Common myeloid progenitor, CD34-positive (primary cell): ENCODE measurements at regions of chr2 and their contacts with region 1.

Region 1: DNA sequence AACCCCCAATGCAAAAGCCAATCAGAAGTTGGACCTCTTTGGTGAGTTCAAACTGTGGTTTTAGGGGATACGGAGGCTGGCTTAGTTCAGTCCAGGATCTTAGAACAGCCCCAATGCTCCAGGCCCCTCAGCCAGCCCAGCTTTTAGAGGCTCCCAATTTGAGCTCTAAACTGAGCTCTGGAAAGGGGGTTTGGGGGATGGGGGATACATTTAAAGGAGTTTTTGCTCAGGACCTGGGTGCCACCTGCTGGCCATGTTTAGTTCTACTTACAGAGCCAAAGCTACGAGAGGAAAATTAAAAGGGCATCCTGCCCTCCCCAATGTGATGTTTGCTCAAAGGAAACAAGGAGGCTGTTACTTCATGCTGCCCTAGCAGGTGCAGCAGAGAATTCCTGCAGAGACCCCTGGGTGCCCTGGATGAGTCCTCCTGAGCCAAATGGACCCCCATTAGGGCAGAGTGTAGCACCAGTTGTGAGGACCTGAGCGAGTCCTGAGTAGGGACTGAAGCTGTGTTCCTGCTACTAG is 15.9 kb upstream of the TMEM214 start:
- DNase-seq: peak; percentile 70 to 83 (median 72)
- H3K4me3 ChIP-seq: no peak overlapping the region
- H3K27ac ChIP-seq: no peak overlapping the region
- H3K4me1 ChIP-seq: peaks cover 0 to 9% (median 6%) of the 10 kb centered on the region in 4 experiments
- H3K27me3 ChIP-seq: peaks cover 0 to 7% (median 0%) of the 10 kb centered on the region in 5 experiments

Region 2: DNA sequence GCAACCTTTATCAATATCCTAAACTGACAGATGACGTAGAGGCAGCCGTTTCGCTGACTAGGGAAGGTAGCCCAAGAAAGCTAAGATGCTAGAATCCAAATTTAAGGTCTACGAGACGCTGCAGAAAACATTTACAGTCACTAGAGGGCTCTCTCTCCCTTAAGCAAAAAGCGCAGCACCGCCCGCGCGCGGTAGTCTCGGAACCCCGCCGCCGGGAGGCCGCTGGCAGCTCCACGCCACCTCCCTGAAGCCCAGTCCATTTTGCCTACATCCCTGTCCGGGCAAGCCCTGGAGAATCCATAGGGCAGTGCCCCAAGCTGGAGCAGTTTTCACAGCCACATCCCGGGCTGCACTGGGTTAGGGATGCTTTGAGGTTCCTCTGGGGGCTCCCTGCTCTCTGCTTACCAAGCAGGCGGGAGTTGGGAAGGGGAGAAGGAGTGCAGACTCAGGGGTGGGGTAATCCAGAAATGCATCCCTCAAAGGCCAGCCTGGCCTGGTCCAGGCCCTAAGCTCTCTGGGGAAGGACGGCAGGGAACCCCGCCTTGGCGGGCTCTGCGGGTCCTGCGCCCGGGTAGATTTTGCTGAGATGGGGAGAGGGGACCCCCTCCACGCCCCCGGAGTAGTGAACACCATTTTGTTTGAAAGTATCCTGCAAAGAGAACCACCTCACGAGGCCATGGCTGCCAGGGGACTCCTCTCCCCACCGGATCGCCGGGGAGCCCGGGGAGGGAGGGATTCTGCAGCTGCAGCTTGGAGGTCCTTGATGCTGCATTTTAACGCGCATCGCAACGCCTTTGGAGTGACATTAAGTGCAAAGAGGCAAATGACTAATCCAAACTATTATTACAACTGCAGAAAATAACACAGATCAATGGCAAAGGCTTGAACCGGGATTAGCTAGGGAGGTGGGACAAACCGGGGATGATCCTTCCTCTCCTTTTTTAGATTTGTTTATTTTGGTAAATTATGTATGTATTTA is 170.2 kb before region 1 on chr2:
- CTCF ChIA-PET with region 1: interaction called, 36 read pairs
- POLR2A ChIA-PET with region 1: no interaction called
- DNase-seq: peak; percentile 75 to 86 (median 84)
- H3K4me3 ChIP-seq: peak overlapping the region in 2 of 7 experiments; percentile 31 to 44
- H3K27ac ChIP-seq: no peak overlapping the region
- H3K4me1 ChIP-seq: peaks cover 0 to 35% (median 27%) of the 10 kb centered on the region in 4 experiments
- H3K27me3 ChIP-seq: peaks cover 14 to 78% (median 32%) of the 10 kb centered on the region in 5 experiments

Region 3: GRCh38 chr2:26952374-26952773 is 64.5 kb before region 1 on chr2:
- CTCF ChIA-PET with region 1: interaction called, 319 read pairs
- POLR2A ChIA-PET with region 1: no interaction called
- DNase-seq: no peak
- H3K4me3 ChIP-seq: no peak overlapping the region
- H3K27ac ChIP-seq: no peak overlapping the region
- H3K4me1 ChIP-seq: no peaks in the 10 kb centered on the region
- H3K27me3 ChIP-seq: peaks cover 0 to 4% (median 0%) of the 10 kb centered on the region in 5 experiments

Region 4: GRCh38 chr2:26970244-26970920 is 46.5 kb before region 1 on chr2 and contains the start of gene MAPRE3:
- CTCF ChIA-PET with region 1: interaction called, 319 read pairs
- POLR2A ChIA-PET with region 1: no interaction called
- DNase-seq: peak; percentile 86 to 95 (median 93)
- H3K4me3 ChIP-seq: peak within 1 kb of the TSS; percentile 4 to 78 (median 64)
- H3K27ac ChIP-seq: peak within 1 kb of the TSS in 1 of 2 experiments; percentile 31
- H3K4me1 ChIP-seq: peaks cover 0 to 25% (median 17%) of the 10 kb centered on the region in 4 experiments
- H3K27me3 ChIP-seq: peaks cover 0 to 32% (median 0%) of the 10 kb centered on the region in 5 experiments

Region 5: GRCh38 chr2:26982102-26982742 is 34.6 kb before region 1 on chr2:
- CTCF ChIA-PET with region 1: interaction called, 17 read pairs
- POLR2A ChIA-PET with region 1: no interaction called
- DNase-seq: peak; percentile 76 to 86 (median 85)
- H3K4me3 ChIP-seq: no peak overlapping the region
- H3K27ac ChIP-seq: no peak overlapping the region
- H3K4me1 ChIP-seq: peaks cover 0 to 22% (median 6%) of the 10 kb centered on the region in 4 experiments
- H3K27me3 ChIP-seq: peaks cover 0 to 3% (median 0%) of the 10 kb centered on the region in 5 experiments

Region 6: DNA sequence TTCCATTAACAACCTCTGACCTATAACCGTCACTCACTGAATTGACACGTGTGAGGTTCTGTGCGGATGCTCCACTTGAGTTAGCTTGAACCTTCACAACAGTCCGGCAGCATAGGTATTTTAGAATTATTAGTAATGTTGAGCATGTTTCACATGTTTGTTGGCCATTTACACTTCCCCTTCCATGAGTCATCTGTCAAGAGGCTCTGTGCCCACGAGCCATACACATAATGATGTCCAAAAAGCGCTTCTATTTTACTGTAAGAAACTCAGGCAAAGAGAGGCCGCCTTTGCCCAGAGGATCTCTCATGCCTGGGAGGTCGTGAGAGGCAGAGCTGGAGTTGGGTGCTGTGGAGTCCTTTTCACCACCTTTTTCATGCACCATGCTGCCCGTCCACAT is 13.0 kb before region 1 on chr2:
- CTCF ChIA-PET with region 1: interaction called, 20 read pairs
- POLR2A ChIA-PET with region 1: no interaction called
- DNase-seq: peak in 2 of 3 donors; percentile 31 to 46
- H3K4me3 ChIP-seq: no peak overlapping the region
- H3K27ac ChIP-seq: no peak overlapping the region
- H3K4me1 ChIP-seq: peaks cover 0 to 6% (median 2%) of the 10 kb centered on the region in 4 experiments
- H3K27me3 ChIP-seq: peaks cover 0 to 3% (median 0%) of the 10 kb centered on the region in 5 experiments

Region 7: GRCh38 chr2:27032495-27033252 is 15.8 kb after region 1 on chr2 and contains the start of gene TMEM214:
- CTCF ChIA-PET with region 1: interaction called, 15 read pairs
- POLR2A ChIA-PET with region 1: no interaction called
- DNase-seq: peak; percentile 55 to 67 (median 62)
- H3K4me3 ChIP-seq: peak within 1 kb of the TSS; percentile 85 to 98 (median 92)
- H3K27ac ChIP-seq: peak within 1 kb of the TSS; percentile 6 to 89
- H3K4me1 ChIP-seq: peaks cover 4 to 17% (median 16%) of the 10 kb centered on the region in 4 experiments
- H3K27me3 ChIP-seq: no peaks in the 10 kb centered on the region

Region 8: DNA sequence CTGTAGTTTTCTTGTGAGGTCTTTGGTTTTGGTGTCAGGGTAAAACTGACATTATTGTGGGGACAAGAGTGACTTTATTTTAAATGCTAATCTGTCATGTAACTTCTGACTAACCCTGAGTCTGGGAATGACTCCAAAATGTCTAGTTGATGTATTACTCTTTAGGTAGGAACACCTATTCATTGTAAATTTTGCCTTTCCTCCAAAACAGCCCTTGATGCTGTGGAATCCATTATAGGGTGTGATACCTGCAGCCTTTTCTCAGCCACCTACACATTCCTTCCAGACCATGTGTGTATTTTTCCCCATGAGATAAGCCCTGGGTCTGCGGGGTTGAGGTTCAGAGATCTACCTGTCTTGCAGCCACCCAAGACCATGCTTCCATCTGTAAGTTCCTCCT is 126.4 kb after region 1 on chr2:
- CTCF ChIA-PET with region 1: no interaction called
- POLR2A ChIA-PET with region 1: no interaction called
- DNase-seq: no peak
- H3K4me3 ChIP-seq: no peak overlapping the region
- H3K27ac ChIP-seq: no peak overlapping the region
- H3K4me1 ChIP-seq: no peaks in the 10 kb centered on the region
- H3K27me3 ChIP-seq: peaks cover 0 to 2% (median 0%) of the 10 kb centered on the region in 5 experiments